Ascending aorta (tissue), 2 donors: ENCODE measurements at regions of chr12 and their contacts with region 1.

Region 1: DNA sequence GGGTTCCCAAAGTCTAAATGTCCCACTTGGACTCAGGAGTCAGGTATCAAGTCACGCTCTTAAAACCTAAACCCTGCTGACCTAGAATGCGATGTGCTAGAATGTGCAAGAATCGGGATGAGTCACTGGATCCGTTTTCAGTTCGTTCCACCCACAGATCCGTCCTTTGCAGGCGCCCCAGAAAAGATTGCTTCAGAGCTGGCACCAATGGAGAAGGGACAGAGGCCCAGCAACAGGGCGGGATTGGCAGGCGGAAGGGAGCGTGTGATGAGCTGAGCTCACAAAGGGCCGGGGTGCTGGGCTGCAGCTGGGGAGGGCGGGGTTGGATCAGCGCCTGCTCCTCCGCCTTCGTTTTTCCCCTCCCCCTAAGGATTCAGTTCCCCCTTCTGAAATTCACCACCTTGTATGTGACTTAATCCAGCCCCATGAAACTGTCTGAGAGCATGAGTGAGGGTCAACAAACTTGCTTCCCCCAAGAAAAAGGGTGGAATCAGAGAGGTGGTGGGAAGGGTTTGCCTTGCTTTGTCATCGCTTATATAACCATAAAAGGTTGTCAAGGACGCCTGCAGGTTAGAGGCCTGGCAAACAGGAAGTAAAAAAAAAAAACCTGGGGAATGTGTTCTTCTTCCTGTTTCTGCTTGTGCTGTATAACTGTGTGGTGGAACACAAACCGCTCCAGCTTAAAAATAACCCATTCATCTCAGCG is 2.8 kb upstream of the UBC start:
- DNase-seq: peak; percentile 96 to 99
- H3K4me3 ChIP-seq: peak overlapping the region; percentile 45 to 72
- H3K27ac ChIP-seq: peak overlapping the region; percentile 99 to 100
- H3K4me1 ChIP-seq: peaks cover 5 to 39% of the 10 kb centered on the region in 2 donors
- H3K27me3 ChIP-seq: no peaks in the 10 kb centered on the region
- CTCF ChIP-seq: no peak

Region 2: DNA sequence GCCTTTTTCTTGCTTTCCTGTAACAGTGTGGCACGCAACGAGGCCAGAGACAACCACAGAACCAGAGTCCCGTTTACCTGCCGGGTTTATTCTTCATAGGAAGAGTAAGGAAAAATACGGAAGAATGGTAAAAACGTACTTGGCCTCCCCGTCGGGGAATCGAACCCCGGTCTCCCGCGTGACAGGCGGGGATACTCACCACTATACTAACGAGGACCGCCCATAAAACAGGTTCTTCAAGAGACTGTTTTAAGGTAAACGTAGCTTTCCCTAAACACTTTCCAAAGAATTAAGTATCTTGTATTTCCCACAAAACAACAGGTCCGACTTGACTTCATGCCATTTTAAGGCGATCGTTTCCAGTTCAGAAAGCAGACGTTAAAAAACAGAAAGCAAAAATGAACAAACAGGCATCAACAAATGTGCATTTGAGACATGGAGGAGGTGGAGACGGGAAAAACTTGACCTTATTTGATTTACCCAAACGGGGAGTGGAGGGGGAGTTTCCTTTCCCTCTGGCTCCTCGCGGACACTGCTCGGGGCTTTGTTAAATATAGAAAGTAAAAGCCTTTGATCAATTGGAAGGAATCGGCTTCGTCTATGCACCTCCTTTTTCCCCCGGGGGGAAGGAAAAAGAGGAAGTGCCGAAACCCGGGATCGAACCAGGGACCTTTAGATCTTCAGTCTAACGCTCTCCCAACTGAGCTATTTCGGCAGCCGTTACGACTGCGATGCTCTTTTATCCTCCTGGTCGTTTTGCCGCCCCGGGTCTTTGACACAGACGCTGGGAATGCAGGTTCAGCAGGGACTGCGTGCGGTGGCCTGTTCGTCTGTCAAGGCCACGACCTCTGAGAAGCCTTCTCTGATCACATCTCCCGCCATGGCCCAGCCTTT is 10.2 kb after region 1 on chr12:
- intact Hi-C with region 1: loop called (anchors 1 kb)
- DNase-seq: peak; percentile 74 to 97
- H3K4me3 ChIP-seq: peak overlapping the region; percentile 57 to 67
- H3K27ac ChIP-seq: peak overlapping the region; percentile 88 to 93
- H3K4me1 ChIP-seq: peaks cover 0 to 5% of the 10 kb centered on the region in 2 donors
- H3K27me3 ChIP-seq: no peaks in the 10 kb centered on the region
- CTCF ChIP-seq: no peak